B cell (primary cell): ENCODE measurements at regions of chr17 and their contacts with region 1.

Region 1: GRCh38 chr17:73311781-73312641 is at the start of gene CDC42EP4:
- DNase-seq: peak; percentile 83
- ATAC-seq: peak; percentile 90
- H3K4me3 ChIP-seq: peak within 1 kb of the TSS; percentile 60 to 74 (median 68)
- H3K4me3 Mint-ChIP-seq: peak within 1 kb of the TSS; percentile 94
- H3K27ac ChIP-seq: peak within 1 kb of the TSS; percentile 12 to 70
- H3K27ac Mint-ChIP-seq: peak within 1 kb of the TSS; percentile 61
- H3K4me1 ChIP-seq: peaks cover 19 to 30% of the 10 kb centered on the region in 2 donors
- H3K4me1 Mint-ChIP-seq: peaks cover 21% of the 10 kb centered on the region
- H3K27me3 ChIP-seq: peaks cover 0 to 16% (median 4%) of the 10 kb centered on the region in 4 experiments
- H3K27me3 Mint-ChIP-seq: no peaks in the 10 kb centered on the region
- CTCF ChIP-seq: no peak
- total RNA-seq, gene CDC42EP4: 0.66 and 2.0 TPM in 2 replicates

Region 2: DNA sequence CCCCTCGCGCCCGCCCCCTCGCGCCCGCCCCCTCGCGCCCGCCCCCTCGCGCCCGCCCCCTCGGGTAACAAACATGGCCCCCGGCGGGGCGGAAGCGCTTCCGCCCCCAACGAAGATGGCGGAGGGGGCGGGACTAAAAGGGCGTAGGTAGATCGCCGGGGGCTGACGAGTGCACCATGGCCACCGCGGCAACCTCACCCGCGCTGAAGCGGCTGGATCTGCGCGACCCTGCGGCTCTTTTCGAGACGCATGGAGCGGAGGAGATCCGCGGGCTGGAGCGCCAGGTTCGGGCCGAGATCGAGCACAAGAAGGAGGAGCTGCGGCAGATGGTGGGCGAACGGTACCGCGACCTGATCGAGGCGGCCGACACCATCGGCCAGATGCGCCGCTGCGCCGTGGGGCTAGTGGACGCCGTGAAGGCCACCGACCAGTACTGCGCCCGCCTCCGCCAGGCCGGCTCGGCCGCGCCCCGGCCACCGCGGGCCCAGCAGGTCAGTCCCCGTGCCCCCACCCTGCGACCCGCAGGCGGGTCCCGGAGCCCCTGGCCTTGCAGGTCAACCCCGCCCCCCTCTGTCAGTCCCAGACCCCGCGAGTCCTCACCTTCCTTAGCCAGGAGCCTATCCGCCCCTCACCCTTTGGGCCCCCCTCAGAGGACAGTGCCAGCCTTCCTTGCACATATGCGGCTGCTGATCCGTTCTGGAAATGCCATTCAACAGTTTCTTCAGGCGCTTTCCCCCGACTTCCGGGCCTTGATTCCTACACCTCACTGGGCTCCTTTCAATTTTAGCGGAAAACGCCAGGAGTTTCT is 118.9 kb before region 1 on chr17 and contains the start of gene COG1:
- CTCF ChIA-PET with region 1: no interaction called
- POLR2A ChIA-PET with region 1: no interaction called
- intact Hi-C with region 1: loop called (anchors 2 kb)
- DNase-seq: peak; percentile 94
- ATAC-seq: peak; percentile 88
- H3K4me3 ChIP-seq: peak within 1 kb of the TSS; percentile 63 to 94 (median 85)
- H3K4me3 Mint-ChIP-seq: peak within 1 kb of the TSS; percentile 96
- H3K27ac ChIP-seq: peak within 1 kb of the TSS; percentile 72 to 77
- H3K27ac Mint-ChIP-seq: peak within 1 kb of the TSS; percentile 93
- H3K4me1 ChIP-seq: peaks cover 11 to 21% of the 10 kb centered on the region in 2 donors
- H3K4me1 Mint-ChIP-seq: peaks cover 27% of the 10 kb centered on the region
- H3K27me3 ChIP-seq: no peaks in the 10 kb centered on the region
- H3K27me3 Mint-ChIP-seq: no peaks in the 10 kb centered on the region
- CTCF ChIP-seq: no peak
- total RNA-seq, gene COG1: 64.7 and 72.8 TPM in 2 replicates

Region 3: GRCh38 chr17:73231841-73232586 is 80.0 kb before region 1 on chr17:
- CTCF ChIA-PET with region 1: no interaction called
- POLR2A ChIA-PET with region 1: no interaction called
- intact Hi-C with region 1: loop called (anchors 1 kb)
- DNase-seq: peak; percentile 96
- ATAC-seq: peak; percentile 96
- H3K4me3 ChIP-seq: peak overlapping the region; percentile 81 to 96 (median 87)
- H3K4me3 Mint-ChIP-seq: peak overlapping the region; percentile 98
- H3K27ac ChIP-seq: peak overlapping the region; percentile 46 to 83
- H3K27ac Mint-ChIP-seq: peak overlapping the region; percentile 98
- H3K4me1 ChIP-seq: peaks cover 15 to 29% of the 10 kb centered on the region in 2 donors
- H3K4me1 Mint-ChIP-seq: peaks cover 55% of the 10 kb centered on the region
- H3K27me3 ChIP-seq: no peaks in the 10 kb centered on the region
- H3K27me3 Mint-ChIP-seq: no peaks in the 10 kb centered on the region
- CTCF ChIP-seq: no peak

Region 4: GRCh38 chr17:73271072-73271471 is 40.9 kb before region 1 on chr17:
- CTCF ChIA-PET with region 1: no interaction called
- POLR2A ChIA-PET with region 1: no interaction called
- intact Hi-C with region 1: loop called (anchors 5 kb)
- DNase-seq: peak; percentile 58
- ATAC-seq: peak; percentile 78
- H3K4me3 ChIP-seq: no peak overlapping the region
- H3K4me3 Mint-ChIP-seq: peak overlapping the region; percentile 45
- H3K27ac ChIP-seq: no peak overlapping the region
- H3K27ac Mint-ChIP-seq: no peak overlapping the region
- H3K4me1 ChIP-seq: peaks cover 0 to 8% of the 10 kb centered on the region in 2 donors
- H3K4me1 Mint-ChIP-seq: peaks cover 6% of the 10 kb centered on the region
- H3K27me3 ChIP-seq: no peaks in the 10 kb centered on the region
- H3K27me3 Mint-ChIP-seq: no peaks in the 10 kb centered on the region
- CTCF ChIP-seq: no peak

Region 5: GRCh38 chr17:73371285-73371684 is 59.3 kb after region 1 on chr17:
- CTCF ChIA-PET with region 1: interaction called, 23 read pairs
- POLR2A ChIA-PET with region 1: no interaction called
- intact Hi-C with region 1: loop called (anchors 5 kb)
- DNase-seq: no peak
- ATAC-seq: no peak
- H3K4me3 ChIP-seq: no peak overlapping the region
- H3K4me3 Mint-ChIP-seq: no peak overlapping the region
- H3K27ac ChIP-seq: no peak overlapping the region
- H3K27ac Mint-ChIP-seq: no peak overlapping the region
- H3K4me1 ChIP-seq: no peaks in the 10 kb centered on the region
- H3K4me1 Mint-ChIP-seq: no peaks in the 10 kb centered on the region
- H3K27me3 ChIP-seq: no peaks in the 10 kb centered on the region
- H3K27me3 Mint-ChIP-seq: peaks cover 4% of the 10 kb centered on the region
- CTCF ChIP-seq: no peak